ENCODE measurements at regions of chr1 and their contacts with region 1.

Region 1: GRCh38 chr1:145845514-145846161 is at the start of gene NUDT17:
- DNase-seq: peak; percentile 74 to 86 (median 81)
- H3K4me3 ChIP-seq: peak within 1 kb of the TSS; percentile 58
- H3K27ac ChIP-seq: peak within 1 kb of the TSS; percentile 18 to 70
- H3K4me1 ChIP-seq: peaks cover 7% of the 10 kb centered on the region
- H3K27me3 ChIP-seq: no peaks in the 10 kb centered on the region
- CTCF ChIP-seq: peak; percentile 70 to 97 (median 88)
- EP300 ChIP-seq: no peak
- POLR2A ChIP-seq: no peak
- total RNA-seq, gene NUDT17: 2.3 to 5.1 (median 2.9) TPM

Region 2: DNA sequence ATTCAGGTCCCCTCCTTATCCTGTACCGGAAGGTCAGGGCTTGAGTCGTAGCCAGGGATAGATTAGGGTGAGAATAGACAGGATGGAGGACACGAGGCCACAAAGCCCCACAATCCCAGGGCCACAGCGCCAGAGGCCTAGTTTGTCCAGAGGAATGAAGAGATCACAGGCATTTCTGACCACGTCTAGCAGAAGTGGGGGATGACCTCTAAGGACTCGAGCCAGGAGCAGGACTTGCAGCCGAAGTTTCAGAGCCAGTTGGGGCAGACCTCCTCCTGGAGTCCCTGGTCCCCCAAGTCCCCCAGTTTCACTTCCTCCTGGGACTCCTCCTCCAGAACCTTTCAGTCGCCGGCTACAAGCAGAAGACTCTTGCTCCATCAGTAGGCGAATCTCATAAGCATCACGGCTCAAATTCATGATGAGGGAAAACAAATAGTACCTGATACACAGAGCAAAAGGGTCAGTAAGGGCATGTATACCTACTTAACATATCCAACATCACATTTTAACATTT is 66.5 kb after region 1 on chr1:
- intact Hi-C with region 1: loop called in 2 of 4 experiments (anchors 5 to 10 kb)
- DNase-seq: peak in 1 of 5 donors; percentile 25
- H3K4me3 ChIP-seq: no peak overlapping the region
- H3K27ac ChIP-seq: no peak overlapping the region
- H3K4me1 ChIP-seq: no peaks in the 10 kb centered on the region
- H3K27me3 ChIP-seq: no peaks in the 10 kb centered on the region
- CTCF ChIP-seq: no peak
- EP300 ChIP-seq: no peak
- POLR2A ChIP-seq: no peak

Region 3: DNA sequence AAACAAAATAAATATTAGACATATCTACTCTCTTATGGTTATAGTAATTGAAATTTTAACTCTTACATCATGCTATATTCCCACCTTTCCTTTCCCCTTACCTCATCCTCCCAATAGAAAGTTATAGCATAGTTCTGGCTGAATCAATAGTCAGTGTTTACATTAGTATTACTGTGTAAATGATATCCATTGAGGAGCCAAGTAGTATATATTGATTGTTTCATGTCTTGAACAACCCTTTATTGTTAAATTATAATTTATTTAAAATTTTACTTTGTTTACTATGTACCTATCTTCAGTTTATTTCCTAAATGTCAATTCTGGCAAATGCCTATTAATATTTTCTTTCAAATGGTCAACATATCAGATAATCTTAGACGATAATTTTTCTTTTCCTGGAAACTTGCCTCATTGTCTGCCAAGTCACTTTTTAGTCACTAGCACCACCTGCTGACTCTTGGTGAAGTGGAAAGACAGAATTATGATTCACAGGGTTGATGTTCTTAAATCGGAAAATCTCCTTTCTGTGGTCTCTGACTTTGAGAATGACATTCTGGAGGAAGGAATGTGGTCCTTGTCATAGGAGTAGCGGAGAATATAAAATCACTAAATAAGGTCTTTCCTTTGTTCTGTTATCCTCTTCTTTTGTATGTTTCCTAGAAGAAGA is 167.2 kb after region 1 on chr1:
- intact Hi-C with region 1: loop called in 3 of 4 experiments (anchors 5 to 10 kb)
- DNase-seq: peak in 2 of 5 donors; percentile 36 to 63
- H3K4me3 ChIP-seq: no peak overlapping the region
- H3K27ac ChIP-seq: no peak overlapping the region
- H3K4me1 ChIP-seq: peaks cover 4% of the 10 kb centered on the region
- H3K27me3 ChIP-seq: no peaks in the 10 kb centered on the region
- CTCF ChIP-seq: peak; percentile 39 to 91 (median 84)
- EP300 ChIP-seq: no peak
- POLR2A ChIP-seq: no peak

Measured in ovary (tissue), 10 donors.